ENCODE measurements at regions of chr22 and their contacts with region 1.

Region 1: DNA sequence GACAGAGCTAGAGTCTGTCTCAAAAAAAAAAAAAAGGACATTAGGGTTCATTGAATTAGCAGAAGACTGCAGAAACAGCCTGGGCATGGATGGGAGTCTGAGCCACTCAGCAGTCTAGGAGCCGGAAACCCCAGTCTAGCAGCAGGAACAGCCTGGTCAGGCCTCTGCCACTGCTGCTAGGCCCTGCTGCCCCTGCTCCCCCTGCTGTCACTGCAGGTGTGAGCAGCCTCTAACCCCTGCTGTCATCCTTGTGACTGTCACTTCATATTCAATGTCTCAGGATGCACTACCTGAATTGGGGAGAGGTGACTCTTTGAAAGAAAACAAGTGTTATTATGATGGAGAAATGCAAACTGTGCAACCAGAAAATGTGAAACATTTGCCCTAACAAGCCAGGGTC is 7.0 kb upstream of the DDX17 start:
- DNase-seq: peak; percentile 41 to 62 (median 56)
- H3K4me3 ChIP-seq: no peak overlapping the region
- H3K27ac ChIP-seq: no peak overlapping the region
- H3K4me1 ChIP-seq: peaks cover 0 to 16% (median 12%) of the 10 kb centered on the region in 4 experiments
- H3K27me3 ChIP-seq: no peaks in the 10 kb centered on the region

Region 2: GRCh38 chr22:38524429-38524828 is 11.4 kb after region 1 on chr22:
- CTCF ChIA-PET with region 1: interaction called, 16 read pairs
- POLR2A ChIA-PET with region 1: no interaction called
- DNase-seq: peak in 2 of 3 donors; percentile 21 to 25
- H3K4me3 ChIP-seq: no peak overlapping the region
- H3K27ac ChIP-seq: no peak overlapping the region
- H3K4me1 ChIP-seq: peaks cover 0 to 6% (median 0%) of the 10 kb centered on the region in 4 experiments
- H3K27me3 ChIP-seq: no peaks in the 10 kb centered on the region

Region 3: DNA sequence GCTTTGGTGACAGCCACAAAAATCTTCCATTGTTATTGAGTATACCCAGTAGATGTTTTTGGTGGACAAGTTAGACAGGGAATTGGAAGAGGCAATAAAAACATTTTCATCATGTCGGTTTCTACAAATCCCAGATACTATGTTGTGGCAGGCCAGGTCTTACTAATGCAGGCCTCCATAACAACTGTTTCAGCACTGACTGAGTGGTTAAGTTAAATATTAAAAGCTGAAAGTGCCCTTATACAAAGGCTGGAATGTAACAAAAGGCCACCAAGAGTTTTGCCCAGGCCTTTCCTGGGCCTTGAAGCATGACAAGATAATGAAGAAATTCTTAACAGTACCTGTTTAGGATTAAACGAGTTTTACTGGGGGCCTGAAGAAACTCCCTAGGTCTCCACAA is 27.6 kb after region 1 on chr22:
- CTCF ChIA-PET with region 1: no interaction called
- POLR2A ChIA-PET with region 1: no interaction called
- DNase-seq: no peak
- H3K4me3 ChIP-seq: no peak overlapping the region
- H3K27ac ChIP-seq: no peak overlapping the region
- H3K4me1 ChIP-seq: no peaks in the 10 kb centered on the region
- H3K27me3 ChIP-seq: no peaks in the 10 kb centered on the region

Region 4: DNA sequence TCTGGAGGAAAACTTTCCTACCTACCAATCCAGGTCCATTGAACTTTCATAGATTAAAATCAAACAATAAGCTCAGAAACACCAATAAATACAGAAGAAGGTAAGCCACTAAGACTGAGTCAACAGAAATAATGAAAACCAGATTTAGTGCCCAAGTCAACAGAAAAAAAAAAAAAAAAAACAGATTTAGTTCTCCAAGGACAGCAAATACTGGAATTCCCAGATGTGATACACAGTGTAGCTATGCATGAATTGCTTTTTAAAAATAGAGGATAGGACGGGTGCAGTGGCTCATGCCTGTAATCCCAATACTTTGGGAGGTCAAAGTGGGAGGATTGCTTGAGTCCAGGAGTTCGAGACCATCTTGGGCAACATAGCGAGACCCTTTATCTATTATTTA is 41.2 kb after region 1 on chr22:
- CTCF ChIA-PET with region 1: no interaction called
- POLR2A ChIA-PET with region 1: no interaction called
- DNase-seq: no peak
- H3K4me3 ChIP-seq: no peak overlapping the region
- H3K27ac ChIP-seq: no peak overlapping the region
- H3K4me1 ChIP-seq: no peaks in the 10 kb centered on the region
- H3K27me3 ChIP-seq: no peaks in the 10 kb centered on the region